ENCODE measurements at regions of chr1 and their contacts with region 1.

Region 1: GRCh38 chr1:52141513-52142219 is at the start of gene ZFYVE9:
- DNase-seq: peak; percentile 90
- H3K4me3 ChIP-seq: peak within 1 kb of the TSS; percentile 97
- H3K27ac ChIP-seq: peak within 1 kb of the TSS; percentile 94
- H3K4me1 ChIP-seq: peaks cover 19% of the 10 kb centered on the region
- H3K27me3 ChIP-seq: no peaks in the 10 kb centered on the region
- CTCF ChIP-seq: peak; percentile 48; the same call in 1 of the 2 replicates
- total RNA-seq, gene ZFYVE9: 19.6 and 23.3 TPM in 2 replicates

Region 2: DNA sequence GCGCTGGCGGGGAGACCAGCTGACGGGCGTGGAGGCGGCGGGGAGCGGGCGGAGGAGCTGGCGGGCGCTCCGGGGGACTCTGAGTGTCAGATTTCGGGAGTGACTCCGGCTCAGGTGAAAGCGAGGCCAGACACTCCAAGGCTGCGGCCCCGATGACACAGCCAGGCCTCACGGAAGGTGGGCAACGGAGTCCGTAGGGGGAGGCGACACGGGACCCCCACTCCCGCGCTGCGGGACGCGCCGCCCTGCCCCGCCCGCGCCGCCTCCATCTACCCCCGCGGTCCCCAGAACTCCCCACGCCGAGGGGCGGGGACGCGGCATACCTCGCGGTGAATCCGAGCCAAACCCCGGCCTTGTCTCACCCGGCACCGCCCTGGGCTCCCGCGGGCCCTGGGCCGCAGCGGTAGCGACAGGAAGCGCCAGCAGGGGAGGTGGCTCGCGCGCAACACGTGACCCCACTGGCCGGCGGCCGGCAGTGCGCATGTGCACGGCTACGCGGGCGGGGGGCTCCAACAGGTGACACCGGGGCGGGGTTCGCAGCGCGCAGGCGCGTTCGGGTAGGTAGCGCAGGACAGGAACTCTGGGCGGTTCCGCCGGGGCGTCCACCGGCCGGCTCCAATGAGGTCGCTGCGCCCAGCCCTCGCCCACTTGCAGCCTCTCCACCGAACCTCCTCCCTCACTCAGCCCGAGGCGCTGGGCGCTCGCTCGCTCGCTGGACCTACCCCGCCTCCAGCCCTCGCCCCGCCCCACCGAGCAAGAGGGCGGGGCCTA is 224.3 kb after region 1 on chr1 and contains the start of gene CC2D1B:
- CTCF ChIA-PET with region 1: no interaction called
- POLR2A ChIA-PET with region 1: no interaction called
- intact Hi-C with region 1: loop called (anchors 5 kb)
- DNase-seq: peak; percentile 99
- H3K4me3 ChIP-seq: peak within 1 kb of the TSS; percentile 92
- H3K27ac ChIP-seq: peak within 1 kb of the TSS; percentile 91
- H3K4me1 ChIP-seq: peaks cover 12% of the 10 kb centered on the region
- H3K27me3 ChIP-seq: no peaks in the 10 kb centered on the region
- CTCF ChIP-seq: no peak; the same call in 1 of the 2 replicates
- total RNA-seq, gene CC2D1B: 30.9 and 34.7 TPM in 2 replicates

Region 3: GRCh38 chr1:52460694-52461093 is 319.0 kb after region 1 on chr1:
- CTCF ChIA-PET with region 1: no interaction called
- POLR2A ChIA-PET with region 1: no interaction called
- intact Hi-C with region 1: no loop called
- DNase-seq: no peak
- H3K4me3 ChIP-seq: no peak overlapping the region
- H3K27ac ChIP-seq: no peak overlapping the region
- H3K4me1 ChIP-seq: peaks cover 4% of the 10 kb centered on the region
- H3K27me3 ChIP-seq: no peaks in the 10 kb centered on the region
- CTCF ChIP-seq: no peak

Measured in A673 (cell line).